Left lung (tissue), 14 donors: ENCODE measurements at regions of chr2 and their contacts with region 1.

Region 1: GRCh38 chr2:234500394-234501006 is 3.6 kb upstream of the ARL4C start:
- DNase-seq: peak in 2 of 4 donors; percentile 53 to 55
- ATAC-seq: peak; percentile 61
- H3K4me3 ChIP-seq: no peak overlapping the region
- H3K27ac ChIP-seq: no peak overlapping the region
- H3K4me1 ChIP-seq: peaks cover 3 to 14% of the 10 kb centered on the region in 2 donors
- H3K27me3 ChIP-seq: peaks cover 0 to 20% of the 10 kb centered on the region in 2 donors
- CTCF ChIP-seq: peak; percentile 35 to 55

Region 2: GRCh38 chr2:233976690-233977294 is 523.7 kb before region 1 on chr2:
- intact Hi-C with region 1: loop called in 1 of 2 experiments (anchors 10 kb)
- DNase-seq: peak in 2 of 4 donors; percentile 25 to 52
- ATAC-seq: peak; percentile 72
- H3K4me3 ChIP-seq: no peak overlapping the region
- H3K27ac ChIP-seq: no peak overlapping the region
- H3K4me1 ChIP-seq: no peaks in the 10 kb centered on the region
- H3K27me3 ChIP-seq: peaks cover 0 to 19% of the 10 kb centered on the region in 2 donors
- CTCF ChIP-seq: peak; percentile 16 to 30

Region 3: DNA sequence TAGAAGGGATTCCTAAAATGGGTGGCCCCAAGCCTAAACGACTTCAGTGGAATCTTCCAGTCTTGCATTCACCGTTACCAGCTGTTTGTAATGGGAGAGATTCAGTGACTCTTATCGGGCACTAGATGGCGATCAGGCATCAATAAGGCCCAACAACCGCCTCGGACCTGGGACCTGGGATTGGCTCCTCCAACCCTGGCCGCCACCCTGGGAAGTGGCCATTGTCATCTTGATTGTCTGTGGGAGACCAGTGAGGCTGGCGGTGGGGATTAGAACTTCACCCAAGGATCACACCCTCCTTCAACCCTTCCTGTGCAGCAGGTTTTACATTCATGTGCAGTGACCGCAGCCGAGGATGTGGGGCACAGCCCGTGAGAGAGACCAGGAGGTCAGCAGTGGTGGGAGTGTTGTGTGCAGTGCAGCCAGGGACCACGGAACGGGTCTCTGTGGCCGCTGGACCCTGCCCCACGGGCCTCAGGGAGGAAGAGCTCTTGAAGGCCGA is 364.7 kb before region 1 on chr2:
- intact Hi-C with region 1: loop called in 1 of 2 experiments (anchors 5 kb)
- DNase-seq: peak; percentile 42 to 78 (median 70)
- ATAC-seq: peak; percentile 90
- H3K4me3 ChIP-seq: no peak overlapping the region
- H3K27ac ChIP-seq: no peak overlapping the region
- H3K4me1 ChIP-seq: peaks cover 0 to 8% of the 10 kb centered on the region in 2 donors
- H3K27me3 ChIP-seq: peaks cover 0 to 5% of the 10 kb centered on the region in 2 donors
- CTCF ChIP-seq: peak; percentile 74 to 78

Region 4: DNA sequence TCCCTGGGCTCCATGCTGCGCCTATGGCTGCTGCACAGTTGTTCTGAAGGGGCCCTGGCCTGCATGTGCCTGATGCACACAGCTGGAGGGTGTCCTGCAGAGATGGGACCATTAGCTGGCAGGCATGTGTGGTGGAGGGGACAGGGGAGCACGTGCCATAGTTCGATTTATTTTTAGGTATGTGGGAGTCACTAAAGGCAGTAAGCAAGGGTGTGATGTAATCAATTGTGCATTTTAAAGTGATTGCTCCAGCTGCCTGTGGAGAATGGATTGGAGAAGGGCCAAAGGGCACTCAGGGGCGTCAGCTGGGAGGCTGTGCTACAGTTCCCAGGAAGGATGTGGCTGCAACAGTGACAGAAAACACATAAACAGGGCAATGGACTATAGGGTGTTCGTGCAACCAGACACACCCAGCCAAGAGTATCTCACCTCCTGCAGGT is 208.7 kb before region 1 on chr2:
- intact Hi-C with region 1: loop called in 1 of 2 experiments (anchors 5 kb)
- DNase-seq: peak in 1 of 4 donors; percentile 31
- ATAC-seq: no peak
- H3K4me3 ChIP-seq: no peak overlapping the region
- H3K27ac ChIP-seq: peak overlapping the region in 1 of 2 donors; percentile 46
- H3K4me1 ChIP-seq: peaks cover 0 to 32% of the 10 kb centered on the region in 2 donors
- H3K27me3 ChIP-seq: no peaks in the 10 kb centered on the region
- CTCF ChIP-seq: no peak

Region 5: GRCh38 chr2:234335661-234336228 is 164.8 kb before region 1 on chr2:
- intact Hi-C with region 1: no loop called
- DNase-seq: peak in 3 of 4 donors; percentile 39 to 78 (median 64)
- ATAC-seq: peak; percentile 76
- H3K4me3 ChIP-seq: no peak overlapping the region
- H3K27ac ChIP-seq: no peak overlapping the region
- H3K4me1 ChIP-seq: no peaks in the 10 kb centered on the region
- H3K27me3 ChIP-seq: no peaks in the 10 kb centered on the region
- CTCF ChIP-seq: no peak

Region 6: GRCh38 chr2:234643407-234643806 is 142.9 kb after region 1 on chr2:
- intact Hi-C with region 1: no loop called
- DNase-seq: no peak
- ATAC-seq: no peak
- H3K4me3 ChIP-seq: no peak overlapping the region
- H3K27ac ChIP-seq: no peak overlapping the region
- H3K4me1 ChIP-seq: no peaks in the 10 kb centered on the region
- H3K27me3 ChIP-seq: no peaks in the 10 kb centered on the region
- CTCF ChIP-seq: no peak